Posterior cingulate gyrus (tissue), 11 donors: ENCODE measurements at regions of chr12 and their contacts with region 1.

Region 1: GRCh38 chr12:4037747-4038312 is 164.6 kb upstream of the PARP11 start:
- DNase-seq: peak in 3 of 10 donors; percentile 26 to 54 (median 33)

Region 2: GRCh38 chr12:3885277-3886094 is 152.3 kb before region 1 on chr12:
- intact Hi-C with region 1: loop called (anchors 1 kb)
- DNase-seq: peak in 1 of 10 donors; percentile 20

Region 3: DNA sequence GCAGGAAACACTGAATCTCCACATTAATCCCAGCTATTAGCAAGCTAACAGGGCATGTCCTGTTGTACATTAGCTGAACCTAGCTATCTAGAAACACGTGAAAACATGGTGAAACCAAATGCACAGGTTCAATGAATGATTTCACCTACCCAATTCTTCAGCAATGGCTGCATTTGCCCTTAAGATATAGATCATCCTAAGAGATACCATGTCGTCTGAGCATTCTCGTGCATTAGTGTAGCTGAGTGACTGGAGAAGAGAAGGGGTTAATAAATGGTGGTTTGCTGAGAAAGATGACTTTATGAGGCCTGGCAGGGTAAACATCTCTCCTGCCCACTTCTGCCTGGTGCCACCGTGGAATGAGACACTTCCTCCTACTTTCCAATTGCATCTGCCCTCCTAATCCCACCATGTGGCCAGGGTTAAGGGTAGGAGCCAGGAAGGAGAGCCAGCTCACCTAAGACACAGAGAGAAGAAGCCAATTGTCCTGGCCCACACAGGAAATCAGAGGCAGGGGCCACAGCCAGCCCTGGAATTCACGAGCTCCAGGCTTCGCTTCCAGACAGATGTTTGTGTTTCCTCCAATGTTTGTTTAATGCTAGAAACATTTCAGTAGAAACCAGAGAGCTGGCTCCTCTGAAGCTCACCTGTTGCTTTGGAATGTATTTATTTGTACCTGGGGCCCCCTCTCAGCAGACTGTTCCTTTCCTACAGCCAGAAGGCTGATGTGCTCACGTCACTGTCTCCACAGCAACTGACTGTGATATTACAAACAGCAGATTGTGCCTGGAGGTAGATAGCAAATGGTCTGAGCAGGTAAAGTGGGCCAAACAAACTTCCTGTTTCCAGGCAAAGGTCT is 38.6 kb before region 1 on chr12:
- intact Hi-C with region 1: loop called (anchors 5 kb)
- DNase-seq: no peak